Panc1 (cell line): ENCODE measurements at regions of chr16 and their contacts with region 1.

Region 1: DNA sequence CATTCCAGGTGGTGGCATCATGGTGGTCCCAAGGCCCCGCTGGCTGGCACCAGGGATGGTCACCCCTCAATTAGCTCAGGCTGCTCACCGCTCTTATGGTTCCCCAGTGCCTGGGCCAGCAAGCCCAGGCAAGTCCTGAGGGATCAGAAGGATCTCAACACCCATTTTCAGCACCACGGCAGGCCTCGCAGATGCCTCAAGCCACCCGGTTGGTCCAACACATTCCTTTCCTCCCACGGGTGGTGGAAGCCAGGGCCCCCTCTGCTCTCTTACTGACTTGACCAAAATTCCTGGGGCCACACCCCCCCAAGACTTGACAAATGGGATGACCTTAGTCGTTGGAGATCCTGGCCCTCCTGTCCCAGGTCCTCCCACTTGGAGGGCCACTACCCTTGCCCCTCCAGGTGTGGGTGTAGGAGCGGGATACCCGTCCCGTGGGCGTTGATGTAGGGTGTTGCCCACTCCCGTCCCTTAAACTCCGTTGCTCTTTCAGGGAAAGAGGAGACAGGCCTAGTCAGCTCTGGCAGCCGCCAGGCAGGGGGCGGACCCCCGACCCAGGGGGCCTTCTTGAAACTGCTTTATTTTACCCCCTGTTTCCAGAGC is 5.9 kb downstream of the ZNF205 start:
- DNase-seq: no peak
- ATAC-seq: no peak
- H3K4me3 ChIP-seq: no peak overlapping the region
- H3K27ac ChIP-seq: no peak overlapping the region
- H3K4me1 ChIP-seq: peaks cover 6% of the 10 kb centered on the region; the same call in 1 of the 2 replicates
- H3K27me3 ChIP-seq: no peaks in the 10 kb centered on the region
- CTCF ChIP-seq: no peak

Region 2: GRCh38 chr16:3129137-3130131 is 11.1 kb after region 1 on chr16:
- CTCF ChIA-PET with region 1: interaction called, 10 read pairs
- POLR2A ChIA-PET with region 1: no interaction called
- in situ Hi-C with region 1: no loop called
- intact Hi-C with region 1: no loop called
- DNase-seq: no peak
- ATAC-seq: peak; percentile 76
- H3K4me3 ChIP-seq: peak overlapping the region; percentile 1 to 6; a peak in 3 of 4 replicates
- H3K27ac ChIP-seq: peak overlapping the region; percentile 41; the same call in 1 of the 2 replicates
- H3K4me1 ChIP-seq: no peaks in the 10 kb centered on the region; the same call in 1 of the 2 replicates
- H3K27me3 ChIP-seq: no peaks in the 10 kb centered on the region
- CTCF ChIP-seq: peak; percentile 97